ENCODE measurements at regions of chr6 and their contacts with region 1.

Region 1: GRCh38 chr6:99119109-99120031 is 171.6 kb upstream of the FBXL4 start:
- DNase-seq: peak; percentile 4
- H3K4me3 ChIP-seq: no peak overlapping the region
- H3K27ac ChIP-seq: no peak overlapping the region
- H3K27me3 ChIP-seq: no peaks in the 10 kb centered on the region
- CTCF ChIP-seq: peak; percentile 82

Region 2: GRCh38 chr6:97437087-97437486 is 1682.3 kb before region 1 on chr6:
- CTCF ChIA-PET with region 1: interaction called, 11 read pairs
- POLR2A ChIA-PET with region 1: no interaction called
- DNase-seq: no peak
- H3K4me3 ChIP-seq: no peak overlapping the region
- H3K27ac ChIP-seq: no peak overlapping the region
- H3K27me3 ChIP-seq: no peaks in the 10 kb centered on the region
- CTCF ChIP-seq: peak; percentile 95

Region 3: GRCh38 chr6:97497713-97498331 is 1621.5 kb before region 1 on chr6:
- CTCF ChIA-PET with region 1: interaction called, 31 read pairs
- POLR2A ChIA-PET with region 1: no interaction called
- DNase-seq: peak; percentile 39
- H3K4me3 ChIP-seq: no peak overlapping the region
- H3K27ac ChIP-seq: no peak overlapping the region
- H3K27me3 ChIP-seq: no peaks in the 10 kb centered on the region
- CTCF ChIP-seq: peak; percentile 93

Region 4: GRCh38 chr6:98601716-98602115 is 517.7 kb before region 1 on chr6:
- CTCF ChIA-PET with region 1: no interaction called
- POLR2A ChIA-PET with region 1: no interaction called
- DNase-seq: no peak
- H3K4me3 ChIP-seq: no peak overlapping the region
- H3K27ac ChIP-seq: no peak overlapping the region
- H3K27me3 ChIP-seq: no peaks in the 10 kb centered on the region
- CTCF ChIP-seq: no peak

Region 5: GRCh38 chr6:98970469-98970868 is 148.9 kb before region 1 on chr6:
- CTCF ChIA-PET with region 1: no interaction called
- POLR2A ChIA-PET with region 1: no interaction called
- DNase-seq: no peak
- H3K4me3 ChIP-seq: no peak overlapping the region
- H3K27ac ChIP-seq: no peak overlapping the region
- H3K27me3 ChIP-seq: no peaks in the 10 kb centered on the region
- CTCF ChIP-seq: no peak

Region 6: DNA sequence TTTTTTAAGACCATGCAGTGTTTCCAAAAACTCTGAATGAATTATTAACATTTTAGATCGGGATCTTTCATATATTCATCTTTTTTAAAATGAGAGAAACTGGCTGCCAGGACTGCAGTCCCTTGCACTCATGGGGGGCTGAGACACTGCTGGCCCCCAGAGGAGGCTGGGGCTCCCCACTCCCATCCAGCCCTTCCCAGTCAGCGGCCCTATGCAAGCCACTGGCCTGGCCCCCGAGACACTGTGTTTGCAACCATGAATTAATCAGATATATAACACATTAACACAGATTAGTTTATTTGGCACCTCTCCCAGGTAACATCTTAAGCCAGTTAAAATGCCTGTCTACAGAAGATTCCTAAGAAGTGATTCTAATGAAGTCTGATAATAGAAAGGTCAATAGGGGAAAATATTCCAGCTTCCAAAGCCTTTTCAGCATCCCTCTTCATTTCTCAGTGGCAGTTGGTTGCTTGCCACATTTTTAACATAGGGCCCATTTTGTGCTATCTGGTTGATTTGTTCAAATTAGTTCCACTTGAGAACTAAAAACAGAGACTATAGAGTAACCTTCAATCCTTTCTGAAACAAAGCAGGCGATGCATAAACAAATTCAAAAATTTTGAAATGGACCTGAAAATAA is 12.8 kb after region 1 on chr6:
- CTCF ChIA-PET with region 1: interaction called, 12 read pairs
- POLR2A ChIA-PET with region 1: no interaction called
- DNase-seq: no peak
- H3K4me3 ChIP-seq: no peak overlapping the region
- H3K27ac ChIP-seq: no peak overlapping the region
- H3K27me3 ChIP-seq: no peaks in the 10 kb centered on the region
- CTCF ChIP-seq: no peak